Cardiac septum (tissue), 1 donor: ENCODE measurements at regions of chr3 and their contacts with region 1.

Region 1: GRCh38 chr3:160343132-160343531 is 55.9 kb downstream of the IFT80 start:
- DNase-seq: no peak

Region 2: DNA sequence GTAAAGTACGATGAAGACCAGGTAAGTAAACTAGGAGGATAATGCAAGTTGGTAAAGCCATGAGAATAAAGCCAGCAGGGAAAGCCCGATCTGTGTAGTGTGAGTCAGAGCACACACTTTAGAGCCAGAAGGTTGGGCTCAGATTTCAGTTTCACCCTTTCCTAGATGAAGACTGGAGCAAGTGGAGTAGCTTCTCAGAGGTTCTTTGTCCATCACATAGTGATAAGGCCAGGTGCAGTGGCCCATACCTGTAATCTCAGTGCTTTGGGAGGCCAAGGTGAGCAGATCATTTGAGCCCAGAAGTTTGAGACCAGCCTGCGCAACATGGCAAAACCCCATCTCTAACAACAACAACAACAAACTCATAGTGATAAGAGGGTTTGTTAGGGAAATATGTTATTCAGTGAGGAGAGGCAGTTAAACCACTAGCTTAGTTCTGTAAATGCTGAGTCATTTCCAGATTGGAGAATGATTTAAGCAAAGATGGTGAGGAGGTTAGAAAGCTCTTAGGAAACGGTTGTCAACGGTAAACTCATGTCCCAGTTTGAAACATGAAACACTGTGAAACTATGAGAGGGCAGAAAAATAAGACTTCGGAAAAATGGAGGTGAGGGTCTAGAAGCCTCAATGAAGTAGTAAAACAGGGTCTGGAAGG is 315.5 kb before region 1 on chr3:
- intact Hi-C with region 1: loop called (anchors 2 kb)
- DNase-seq: no peak

Region 3: DNA sequence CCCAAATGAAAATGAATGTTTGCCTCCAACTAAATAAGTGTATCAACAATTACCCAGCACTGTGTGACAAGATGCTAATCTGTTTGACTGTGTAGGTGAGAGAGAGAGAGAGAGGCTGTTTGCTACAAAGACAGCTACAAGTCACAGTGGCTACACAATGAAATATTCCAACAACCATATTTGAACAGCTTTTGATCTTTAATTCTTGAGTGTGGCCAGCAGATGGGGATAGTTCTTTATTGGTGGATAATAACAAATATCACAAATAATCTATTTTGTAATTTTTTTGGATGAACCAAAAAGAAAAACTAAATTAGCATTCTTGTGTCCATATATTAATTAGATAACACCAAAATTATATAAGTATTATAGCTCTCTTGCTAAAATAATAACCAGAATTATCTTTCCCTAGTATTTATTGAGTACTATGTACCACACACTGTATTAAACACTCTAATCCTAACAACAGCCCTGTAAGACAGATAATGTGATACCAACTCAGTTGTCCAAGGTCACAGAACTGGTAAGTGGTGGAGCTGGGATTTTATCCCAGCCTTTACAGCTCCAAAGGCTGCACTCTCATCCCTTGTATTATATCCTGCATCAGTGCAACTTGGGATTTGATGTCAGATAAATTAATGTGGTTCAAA is 179.8 kb before region 1 on chr3:
- intact Hi-C with region 1: loop called (anchors 2 kb)
- DNase-seq: no peak